Left cardiac atrium (tissue), 4 donors: ENCODE measurements at regions of chr3 and their contacts with region 1.

Region 1: DNA sequence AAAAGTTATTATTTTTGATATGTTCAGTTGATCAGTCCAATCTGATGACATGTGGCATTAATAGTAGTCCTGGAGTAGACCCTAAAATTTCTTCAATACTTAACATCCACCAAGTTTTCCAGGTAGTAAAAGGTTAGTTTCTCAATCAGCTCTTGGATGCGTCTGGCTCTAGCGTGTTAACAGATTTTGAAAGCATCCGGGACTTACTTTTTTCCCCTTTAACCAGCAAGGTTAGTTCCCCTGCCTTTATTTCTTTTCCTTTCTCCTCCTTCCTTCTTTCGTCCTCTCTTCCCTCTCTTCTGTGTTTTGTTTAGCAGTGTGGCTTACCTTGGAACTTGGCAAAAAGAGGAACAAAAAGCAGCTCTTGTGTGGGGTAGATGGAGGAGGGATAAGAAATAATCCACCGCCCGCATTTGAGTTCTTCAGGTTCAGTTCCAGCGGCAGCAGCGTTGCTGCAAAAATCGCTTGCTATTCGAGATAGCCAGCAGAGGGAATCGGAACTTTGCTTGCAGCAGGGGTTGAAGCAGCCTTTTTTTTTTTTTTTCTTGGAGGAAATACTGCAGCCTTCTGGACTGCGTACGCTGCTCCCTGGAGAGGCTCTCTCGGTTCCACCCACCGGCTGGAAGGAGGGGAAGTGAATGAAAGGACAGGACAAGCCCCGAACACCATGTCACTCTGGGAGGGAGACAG is at the start of gene RBMS3:
- DNase-seq: peak; percentile 89
- ATAC-seq: peak; percentile 92 to 95
- total RNA-seq, gene RBMS3: 40.7 to 53.2 TPM

Region 2: DNA sequence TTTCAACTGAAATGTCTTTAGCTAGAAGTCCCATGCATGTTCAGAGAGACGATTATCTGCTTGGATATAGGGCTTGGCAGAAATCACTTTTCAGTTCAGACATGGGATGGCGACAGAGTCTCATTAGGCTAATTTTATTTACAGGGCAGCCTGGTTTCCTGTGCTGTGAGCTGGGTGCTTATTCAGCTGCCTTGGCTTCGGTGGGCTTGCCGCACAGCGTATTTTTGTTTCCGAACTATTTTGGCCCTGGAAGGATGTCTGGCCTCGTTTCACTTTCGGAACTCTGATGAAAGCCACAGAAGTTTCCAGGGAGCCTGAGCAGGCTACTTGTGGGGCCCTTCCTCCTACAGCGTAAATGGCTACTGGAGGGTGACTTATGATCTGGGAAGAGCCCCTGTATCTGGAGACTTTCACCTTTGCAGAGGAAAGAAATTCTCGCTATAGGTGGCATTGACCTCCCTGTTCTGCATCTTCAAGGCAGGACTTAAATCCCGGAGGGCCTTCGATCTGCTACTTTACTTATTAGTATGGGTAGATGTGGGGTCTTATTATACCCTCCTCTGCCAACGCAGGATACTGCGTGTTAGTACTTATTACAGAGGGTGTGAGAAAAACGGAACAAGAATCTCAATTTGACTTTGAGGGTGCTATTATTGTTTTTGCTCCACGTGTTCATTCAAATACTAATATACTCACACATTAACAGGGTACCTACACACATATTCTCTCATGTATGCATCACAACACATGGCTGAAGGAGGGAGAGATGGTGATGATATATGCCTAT is 363.6 kb before region 1 on chr3:
- intact Hi-C with region 1: loop called in 1 of 2 experiments (anchors 10 kb)
- DNase-seq: peak; percentile 79
- ATAC-seq: peak; percentile 94 to 96

Region 3: GRCh38 chr3:29332195-29332637 is 51.7 kb after region 1 on chr3:
- intact Hi-C with region 1: loop called in 1 of 2 experiments (anchors 5 kb)
- DNase-seq: no peak
- ATAC-seq: no peak

Region 4: DNA sequence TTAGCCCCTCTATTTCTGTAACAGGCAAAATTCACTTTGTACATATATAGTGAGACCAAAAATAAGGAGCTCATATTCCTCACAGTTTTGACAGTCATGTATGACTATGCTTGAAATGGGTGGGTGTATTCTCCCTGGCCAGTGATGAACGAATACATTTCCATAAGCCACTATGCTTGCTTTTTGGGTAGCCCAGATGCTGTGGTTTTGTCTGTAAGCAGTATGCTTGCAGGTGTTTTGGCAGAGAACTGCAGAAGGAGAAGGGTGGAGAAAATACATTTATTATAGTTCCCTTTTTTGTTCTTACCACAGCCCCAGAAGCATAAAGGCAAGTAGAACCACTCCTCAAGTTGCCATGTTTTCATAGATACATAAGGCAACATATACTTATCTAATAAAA is 131.6 kb after region 1 on chr3:
- intact Hi-C with region 1: loop called in 1 of 2 experiments (anchors 5 kb)
- DNase-seq: no peak
- ATAC-seq: no peak

Region 5: GRCh38 chr3:29515451-29515850 is 234.9 kb after region 1 on chr3:
- intact Hi-C with region 1: loop called in 1 of 2 experiments (anchors 10 kb)
- DNase-seq: no peak
- ATAC-seq: peak in 1 of 2 donors; percentile 44

Region 6: GRCh38 chr3:29764603-29765254 is 484.2 kb after region 1 on chr3:
- intact Hi-C with region 1: loop called in 1 of 2 experiments (anchors 5 kb)
- DNase-seq: no peak
- ATAC-seq: peak; percentile 58 to 68